ENCODE measurements at regions of chr14 and their contacts with region 1.

Region 1: DNA sequence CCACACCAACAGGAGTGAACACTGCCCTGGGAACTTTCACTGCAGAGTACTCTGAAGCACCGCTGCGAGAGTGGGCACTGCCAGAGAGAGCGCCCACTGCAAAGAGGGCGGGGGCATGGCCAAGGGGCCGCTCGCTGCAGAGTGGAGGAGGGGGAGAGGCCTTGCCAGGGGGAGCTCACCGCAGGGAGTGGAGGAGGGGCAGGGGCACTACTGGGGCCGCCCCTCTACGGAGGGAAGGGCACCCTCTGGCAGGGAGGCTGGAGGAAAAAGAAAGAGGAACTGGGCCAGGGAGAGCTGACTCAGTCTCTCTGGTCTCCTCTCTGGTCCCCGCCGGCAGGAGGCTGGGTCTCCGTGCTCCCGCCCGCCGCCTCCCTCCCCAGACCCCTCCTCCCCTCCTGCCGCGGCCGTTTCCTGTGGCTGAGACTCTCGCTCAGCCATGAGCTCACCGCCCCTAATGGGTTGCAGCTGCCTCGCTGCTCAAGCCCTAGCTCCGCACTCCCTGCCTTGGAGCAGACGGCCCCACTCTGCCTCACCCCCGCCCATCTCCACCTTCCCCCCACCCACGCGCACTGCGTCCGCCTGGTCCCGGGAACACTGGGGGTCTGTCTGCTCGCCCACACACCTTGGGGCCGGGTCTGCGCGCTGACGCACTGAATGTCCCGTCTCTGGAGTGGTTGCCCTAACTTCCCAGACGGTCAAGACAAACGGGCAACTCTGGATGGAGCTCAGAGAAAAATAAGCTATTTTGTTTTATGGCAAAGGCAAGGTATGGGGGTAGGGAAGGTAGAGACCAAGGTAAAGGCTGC is 1.3 kb downstream of the ARHGEF40 start:
- DNase-seq: no peak
- ATAC-seq: no peak
- H3K4me3 ChIP-seq: peak overlapping the region; percentile 61 to 74
- H3K27ac ChIP-seq: no peak overlapping the region
- H3K4me1 ChIP-seq: peaks cover 7 to 28% of the 10 kb centered on the region in 2 experiments
- H3K27me3 ChIP-seq: 0 out of 2 replicates have a peak, but pooled peaks cover 4% of the 10 kb centered on the region
- CTCF ChIP-seq: no peak
- POLR2A ChIP-seq: no peak
- RAD21 ChIP-seq: no peak

Region 2: GRCh38 chr14:21092273-21093011 is 21.0 kb after region 1 on chr14:
- CTCF ChIA-PET with region 1: interaction called, 19 read pairs
- POLR2A ChIA-PET with region 1: no interaction called
- RAD21 ChIA-PET with region 1: interaction called, 3 read pairs
- intact Hi-C with region 1: loop called (anchors 1 kb)
- DNase-seq: peak; percentile 40
- ATAC-seq: peak; percentile 85
- H3K4me3 ChIP-seq: no peak overlapping the region
- H3K27ac ChIP-seq: no peak overlapping the region; the same call in 1 of the 2 replicates
- H3K4me1 ChIP-seq: peaks cover 0 to 12% of the 10 kb centered on the region in 2 experiments
- H3K27me3 ChIP-seq: no peaks in the 10 kb centered on the region
- CTCF ChIP-seq: peak; percentile 99 to 100 (median 100)
- POLR2A ChIP-seq: no peak
- RAD21 ChIP-seq: peak; percentile 91

Region 3: DNA sequence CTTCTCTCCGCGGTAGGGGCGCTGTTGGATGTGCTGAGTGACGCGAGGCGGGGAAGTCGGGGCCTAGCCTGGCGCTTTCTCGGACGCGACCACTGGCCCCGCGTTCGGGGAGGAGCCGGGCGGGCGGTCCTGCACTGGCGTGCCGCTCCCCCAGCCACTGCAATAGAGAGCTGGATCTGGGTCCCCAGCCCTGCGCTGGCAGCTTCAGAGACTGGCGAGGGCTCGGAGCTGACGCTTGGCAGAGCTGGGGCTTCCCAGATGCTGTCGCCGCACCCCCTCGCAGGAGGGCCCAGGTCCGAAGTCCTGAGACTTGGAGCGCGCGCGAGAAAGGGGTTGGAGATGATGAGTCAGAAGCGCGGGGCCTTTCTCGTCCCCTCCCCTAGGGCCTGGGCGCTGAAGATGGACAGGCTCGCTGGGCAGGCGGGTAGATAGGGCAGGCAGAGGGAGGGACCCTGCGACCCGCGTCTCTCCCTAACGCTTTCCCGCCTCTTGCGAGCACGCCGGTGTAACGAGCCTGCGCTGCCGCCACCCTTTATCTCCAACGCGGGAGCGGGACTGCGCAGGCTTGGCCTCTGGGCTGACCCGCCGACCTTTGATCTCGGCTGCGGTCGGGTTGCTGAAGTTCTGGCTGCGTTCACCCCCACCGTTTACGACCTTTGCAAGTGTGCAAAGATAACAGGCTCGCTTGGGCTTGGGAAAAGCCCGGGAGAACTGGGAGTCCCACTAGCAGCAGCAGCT is 32.5 kb after region 1 on chr14:
- CTCF ChIA-PET with region 1: interaction called, 59 read pairs
- POLR2A ChIA-PET with region 1: interaction called, 14 read pairs
- RAD21 ChIA-PET with region 1: interaction called, 8 to 16 read pairs
- intact Hi-C with region 1: loop called (anchors 1 kb)
- DNase-seq: peak; percentile 90
- ATAC-seq: peak; percentile 83
- H3K4me3 ChIP-seq: peak overlapping the region; percentile 69 to 74
- H3K27ac ChIP-seq: peak overlapping the region; percentile 95
- H3K4me1 ChIP-seq: peaks cover 56 to 80% of the 10 kb centered on the region in 2 experiments
- H3K27me3 ChIP-seq: no peaks in the 10 kb centered on the region
- CTCF ChIP-seq: peak in 2 of 3 experiments; percentile 68 to 76; a peak in 3 of 6 replicates
- POLR2A ChIP-seq: peak; percentile 64
- RAD21 ChIP-seq: no peak

Region 4: GRCh38 chr14:21136024-21136423 is 64.6 kb after region 1 on chr14:
- CTCF ChIA-PET with region 1: interaction called, 7 read pairs
- POLR2A ChIA-PET with region 1: no interaction called
- RAD21 ChIA-PET with region 1: no interaction called
- intact Hi-C with region 1: loop called (anchors 2 kb)
- DNase-seq: peak; percentile 3
- ATAC-seq: no peak; the same call in 1 of the 2 replicates
- H3K4me3 ChIP-seq: no peak overlapping the region
- H3K27ac ChIP-seq: no peak overlapping the region
- H3K4me1 ChIP-seq: no peaks in the 10 kb centered on the region
- H3K27me3 ChIP-seq: no peaks in the 10 kb centered on the region
- CTCF ChIP-seq: peak; percentile 51 to 71 (median 60); a peak in 5 of 6 replicates
- POLR2A ChIP-seq: no peak
- RAD21 ChIP-seq: peak; percentile 55